CD4-positive, alpha-beta memory T cell (primary cell): ENCODE measurements at regions of chr9 and their contacts with region 1.

Region 1: GRCh38 chr9:93095205-93096130 is 549 bp upstream of the CARD19 start:
- DNase-seq: peak; percentile 100
- H3K4me3 ChIP-seq: peak overlapping the region in 1 of 2 donors; percentile 93
- H3K4me3 Mint-ChIP-seq: peak overlapping the region; percentile 82 to 93 (median 87)
- H3K27ac ChIP-seq: peak overlapping the region; percentile 95
- H3K27ac Mint-ChIP-seq: peak overlapping the region; percentile 87 to 99 (median 98)
- H3K4me1 ChIP-seq: peaks cover 69% of the 10 kb centered on the region
- H3K4me1 Mint-ChIP-seq: peaks cover 47 to 86% (median 70%) of the 10 kb centered on the region in 4 donors
- H3K27me3 ChIP-seq: no peaks in the 10 kb centered on the region
- H3K27me3 Mint-ChIP-seq: no peaks in the 10 kb centered on the region

Region 2: DNA sequence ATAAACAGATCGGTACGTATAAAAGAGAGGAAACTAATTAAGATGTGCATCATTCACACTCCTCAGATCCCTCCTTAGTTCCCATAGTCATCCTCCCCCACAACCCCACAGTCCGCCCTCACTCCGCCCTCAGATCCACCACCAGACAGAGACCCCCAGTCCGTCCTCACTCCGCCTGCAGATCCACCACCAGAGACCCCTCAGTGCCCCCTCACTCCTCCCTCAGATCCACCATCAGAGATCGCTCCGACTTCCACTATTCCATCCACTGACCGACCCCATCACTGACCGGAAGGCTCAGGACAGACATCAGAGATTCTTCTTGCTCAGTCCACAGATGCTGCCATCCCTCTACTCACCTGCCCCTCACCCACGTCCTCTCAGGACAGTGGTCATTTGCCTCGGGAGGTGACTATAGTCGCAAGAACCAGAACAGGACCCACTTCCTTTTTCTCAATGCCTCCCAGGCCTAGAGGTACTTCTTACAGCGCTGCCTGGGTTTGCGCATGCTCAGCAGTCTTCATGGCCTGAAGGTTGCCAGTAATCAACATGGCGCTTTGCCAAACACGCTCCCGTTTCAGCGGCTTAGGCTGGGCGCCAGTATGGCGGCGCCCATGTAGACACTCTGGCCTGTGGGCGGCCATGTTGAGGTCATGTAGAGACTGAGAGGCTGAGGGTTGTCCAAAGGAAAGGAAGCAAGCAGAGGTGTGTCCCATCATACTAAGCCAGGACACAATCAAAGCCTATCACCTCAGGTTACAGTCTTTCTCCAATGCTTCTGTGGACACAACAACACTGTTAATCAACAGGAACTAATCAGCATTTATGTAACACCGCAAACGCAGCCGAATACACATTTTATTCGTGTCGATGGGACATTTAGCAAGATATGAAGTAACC is 217.7 kb before region 1 on chr9 and contains the start of gene ZNF484:
- CTCF ChIA-PET with region 1: no interaction called
- POLR2A ChIA-PET with region 1: no interaction called
- intact Hi-C with region 1: loop called (anchors 1 kb)
- DNase-seq: peak; percentile 94 to 97 (median 95)
- H3K4me3 ChIP-seq: peak within 1 kb of the TSS; percentile 81 to 97
- H3K4me3 Mint-ChIP-seq: peak within 1 kb of the TSS; percentile 87 to 100 (median 99)
- H3K27ac ChIP-seq: peak within 1 kb of the TSS; percentile 94
- H3K27ac Mint-ChIP-seq: peak within 1 kb of the TSS; percentile 96 to 100 (median 99)
- H3K4me1 ChIP-seq: peaks cover 35% of the 10 kb centered on the region
- H3K4me1 Mint-ChIP-seq: peaks cover 30 to 48% (median 40%) of the 10 kb centered on the region in 4 donors
- H3K27me3 ChIP-seq: no peaks in the 10 kb centered on the region
- H3K27me3 Mint-ChIP-seq: no peaks in the 10 kb centered on the region
- total RNA-seq, gene ZNF484: 22.6 to 24.7 TPM

Region 3: GRCh38 chr9:93003552-93004407 is 91.7 kb before region 1 on chr9:
- CTCF ChIA-PET with region 1: interaction called, 7 read pairs
- POLR2A ChIA-PET with region 1: interaction called, 10 read pairs
- intact Hi-C with region 1: loop called (anchors 5 kb)
- DNase-seq: peak; percentile 64 to 73 (median 72)
- H3K4me3 ChIP-seq: no peak overlapping the region
- H3K4me3 Mint-ChIP-seq: peak overlapping the region in 7 of 8 donors; percentile 29 to 78 (median 54)
- H3K27ac ChIP-seq: peak overlapping the region; percentile 44
- H3K27ac Mint-ChIP-seq: peak overlapping the region; percentile 89 to 95 (median 92)
- H3K4me1 ChIP-seq: peaks cover 56% of the 10 kb centered on the region
- H3K4me1 Mint-ChIP-seq: peaks cover 38 to 66% (median 50%) of the 10 kb centered on the region in 4 donors
- H3K27me3 ChIP-seq: no peaks in the 10 kb centered on the region
- H3K27me3 Mint-ChIP-seq: no peaks in the 10 kb centered on the region

Region 4: GRCh38 chr9:93058355-93059096 is 36.9 kb before region 1 on chr9 and contains the start of gene SUSD3:
- CTCF ChIA-PET with region 1: interaction called, 5 read pairs
- POLR2A ChIA-PET with region 1: interaction called, 96 read pairs
- intact Hi-C with region 1: no loop called
- DNase-seq: peak; percentile 58 to 76 (median 63)
- H3K4me3 ChIP-seq: peak within 1 kb of the TSS; percentile 86 to 92
- H3K4me3 Mint-ChIP-seq: peak within 1 kb of the TSS; percentile 94 to 95 (median 95)
- H3K27ac ChIP-seq: peak within 1 kb of the TSS; percentile 72
- H3K27ac Mint-ChIP-seq: peak within 1 kb of the TSS; percentile 96 to 100 (median 99)
- H3K4me1 ChIP-seq: peaks cover 76% of the 10 kb centered on the region
- H3K4me1 Mint-ChIP-seq: peaks cover 30 to 82% (median 58%) of the 10 kb centered on the region in 4 donors
- H3K27me3 ChIP-seq: no peaks in the 10 kb centered on the region
- H3K27me3 Mint-ChIP-seq: no peaks in the 10 kb centered on the region
- total RNA-seq, gene SUSD3: 58.3 to 63.7 TPM

Region 5: GRCh38 chr9:93108291-93109041 is 13.0 kb after region 1 on chr9:
- CTCF ChIA-PET with region 1: interaction called, 26 read pairs
- POLR2A ChIA-PET with region 1: interaction called, 25 read pairs
- intact Hi-C with region 1: no loop called
- DNase-seq: peak in 1 of 5 donors; percentile 44
- H3K4me3 ChIP-seq: no peak overlapping the region
- H3K4me3 Mint-ChIP-seq: peak overlapping the region in 2 of 8 donors; percentile 22 to 63
- H3K27ac ChIP-seq: peak overlapping the region; percentile 6
- H3K27ac Mint-ChIP-seq: peak overlapping the region in 4 of 7 donors; percentile 12 to 84 (median 70)
- H3K4me1 ChIP-seq: peaks cover 52% of the 10 kb centered on the region
- H3K4me1 Mint-ChIP-seq: peaks cover 26 to 60% (median 46%) of the 10 kb centered on the region in 4 donors
- H3K27me3 ChIP-seq: no peaks in the 10 kb centered on the region
- H3K27me3 Mint-ChIP-seq: no peaks in the 10 kb centered on the region

Region 6: DNA sequence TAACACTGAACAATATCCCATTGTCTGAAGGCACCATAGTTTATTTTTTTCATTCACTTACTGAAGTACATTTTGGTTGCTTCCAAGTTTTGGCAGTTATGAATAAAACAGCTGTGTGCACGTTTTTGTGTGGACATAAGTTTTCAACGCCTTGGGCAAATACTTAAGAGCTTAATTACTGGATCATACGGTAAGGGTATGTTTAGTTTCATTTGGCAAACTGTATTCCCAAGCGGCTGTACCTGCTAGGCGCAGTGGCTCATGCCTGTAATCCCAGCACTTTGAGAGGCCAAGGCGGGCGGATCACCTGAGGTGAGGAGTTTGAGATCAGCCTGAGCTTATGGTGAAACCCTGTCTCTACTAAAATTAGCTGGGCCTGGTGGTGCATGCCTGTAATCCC is 292.3 kb after region 1 on chr9:
- CTCF ChIA-PET with region 1: no interaction called
- POLR2A ChIA-PET with region 1: no interaction called
- intact Hi-C with region 1: no loop called
- DNase-seq: no peak
- H3K4me3 ChIP-seq: no peak overlapping the region
- H3K4me3 Mint-ChIP-seq: no peak overlapping the region
- H3K27ac ChIP-seq: no peak overlapping the region
- H3K27ac Mint-ChIP-seq: no peak overlapping the region
- H3K4me1 ChIP-seq: no peaks in the 10 kb centered on the region
- H3K4me1 Mint-ChIP-seq: peaks cover 0 to 2% (median 0%) of the 10 kb centered on the region in 4 donors
- H3K27me3 ChIP-seq: no peaks in the 10 kb centered on the region
- H3K27me3 Mint-ChIP-seq: no peaks in the 10 kb centered on the region

Region 7: GRCh38 chr9:93566408-93567270 is 471.2 kb after region 1 on chr9:
- CTCF ChIA-PET with region 1: no interaction called
- POLR2A ChIA-PET with region 1: interaction called, 3 read pairs
- intact Hi-C with region 1: loop called (anchors 2 kb)
- DNase-seq: peak; percentile 95 to 99 (median 98)
- H3K4me3 ChIP-seq: peak overlapping the region; percentile 30 to 65
- H3K4me3 Mint-ChIP-seq: peak overlapping the region; percentile 79 to 89 (median 83)
- H3K27ac ChIP-seq: peak overlapping the region; percentile 90
- H3K27ac Mint-ChIP-seq: peak overlapping the region; percentile 87 to 97 (median 93)
- H3K4me1 ChIP-seq: peaks cover 25% of the 10 kb centered on the region
- H3K4me1 Mint-ChIP-seq: peaks cover 9 to 29% (median 21%) of the 10 kb centered on the region in 4 donors
- H3K27me3 ChIP-seq: no peaks in the 10 kb centered on the region
- H3K27me3 Mint-ChIP-seq: no peaks in the 10 kb centered on the region